ENCODE measurements at regions of chr4 and their contacts with region 1.

Region 1: GRCh38 chr4:184395971-184396391 is 78.4 kb downstream of the IRF2 start:
- DNase-seq: no peak
- H3K4me3 ChIP-seq: no peak overlapping the region
- H3K27ac ChIP-seq: no peak overlapping the region
- H3K4me1 ChIP-seq: peaks cover 22% of the 10 kb centered on the region
- H3K27me3 ChIP-seq: no peaks in the 10 kb centered on the region
- CTCF ChIP-seq: no peak
- EP300 ChIP-seq: no peak
- POLR2A ChIP-seq: no peak

Region 2: GRCh38 chr4:183165376-183165775 is 1230.6 kb before region 1 on chr4:
- intact Hi-C with region 1: no loop called
- DNase-seq: no peak
- H3K4me3 ChIP-seq: no peak overlapping the region
- H3K27ac ChIP-seq: no peak overlapping the region
- H3K4me1 ChIP-seq: peaks cover 3% of the 10 kb centered on the region
- H3K27me3 ChIP-seq: no peaks in the 10 kb centered on the region
- CTCF ChIP-seq: no peak
- EP300 ChIP-seq: no peak
- POLR2A ChIP-seq: no peak

Region 3: DNA sequence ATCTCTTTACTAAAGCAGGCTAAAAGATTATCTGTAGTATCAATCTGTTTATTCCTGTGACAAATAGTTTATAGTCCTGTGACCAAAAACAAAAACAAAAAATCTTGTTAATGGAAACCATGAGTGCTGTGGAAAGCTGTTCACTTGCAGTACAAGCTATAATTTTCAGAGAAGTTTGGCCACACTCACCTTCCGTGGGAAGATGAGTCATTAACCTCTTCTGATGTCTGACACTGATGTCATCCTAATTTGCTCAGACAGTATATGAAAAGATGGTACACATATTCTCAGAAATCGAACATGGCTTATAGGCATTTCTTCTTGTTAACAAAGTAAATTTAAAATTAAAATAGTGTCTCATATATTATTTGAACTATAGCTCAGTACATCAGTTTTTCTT is 158.4 kb before region 1 on chr4:
- intact Hi-C with region 1: no loop called
- DNase-seq: no peak
- H3K4me3 ChIP-seq: no peak overlapping the region
- H3K27ac ChIP-seq: no peak overlapping the region
- H3K4me1 ChIP-seq: no peaks in the 10 kb centered on the region
- H3K27me3 ChIP-seq: no peaks in the 10 kb centered on the region
- CTCF ChIP-seq: no peak
- EP300 ChIP-seq: no peak
- POLR2A ChIP-seq: no peak

Region 4: GRCh38 chr4:184282251-184282713 is 113.7 kb before region 1 on chr4:
- intact Hi-C with region 1: loop called in 1 of 4 experiments (anchors 10 kb)
- DNase-seq: no peak
- H3K4me3 ChIP-seq: no peak overlapping the region
- H3K27ac ChIP-seq: no peak overlapping the region
- H3K4me1 ChIP-seq: peaks cover 2% of the 10 kb centered on the region
- H3K27me3 ChIP-seq: no peaks in the 10 kb centered on the region
- CTCF ChIP-seq: no peak
- EP300 ChIP-seq: no peak
- POLR2A ChIP-seq: no peak

Region 5: DNA sequence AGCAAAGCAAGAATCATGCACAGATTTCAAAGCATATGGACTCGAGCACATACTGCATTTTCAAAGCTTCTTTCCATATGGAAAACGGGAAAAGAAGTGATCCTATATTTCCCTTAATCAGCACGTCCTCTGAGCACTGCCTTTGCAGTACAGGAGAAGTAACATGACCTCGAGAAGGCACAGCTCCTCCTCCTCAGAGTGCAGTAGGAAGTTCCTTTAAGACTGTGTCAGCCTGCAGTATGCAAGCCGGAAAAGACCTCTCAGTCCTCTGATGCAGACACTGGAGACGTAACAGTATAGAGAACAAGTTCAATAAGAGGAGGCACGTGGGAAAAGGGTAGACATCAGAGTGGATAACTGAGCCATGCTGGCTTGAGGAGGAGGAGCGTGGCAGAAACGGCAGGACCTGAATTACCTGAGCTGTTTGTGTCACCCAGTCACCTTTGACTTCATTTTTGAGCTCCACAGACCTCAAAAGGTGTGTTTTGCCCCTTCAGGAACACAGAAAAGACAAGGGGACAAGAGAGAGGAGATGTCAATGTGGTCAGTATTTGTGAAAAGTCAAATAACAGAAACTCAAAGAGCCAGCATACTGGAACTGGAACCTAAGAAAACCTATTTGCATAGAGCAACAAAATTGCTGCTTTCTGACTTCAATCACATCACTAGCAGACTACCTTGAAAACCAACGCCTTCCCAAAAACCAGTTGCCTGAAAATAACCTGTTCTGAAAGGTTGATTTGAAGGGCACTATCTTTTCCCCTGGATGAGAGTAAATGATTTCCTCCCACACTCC is 57.6 kb after region 1 on chr4:
- intact Hi-C with region 1: loop called in 1 of 4 experiments (anchors 10 kb)
- DNase-seq: no peak
- H3K4me3 ChIP-seq: no peak overlapping the region
- H3K27ac ChIP-seq: no peak overlapping the region
- H3K4me1 ChIP-seq: peaks cover 20% of the 10 kb centered on the region
- H3K27me3 ChIP-seq: no peaks in the 10 kb centered on the region
- CTCF ChIP-seq: no peak
- EP300 ChIP-seq: no peak
- POLR2A ChIP-seq: no peak

Measured in ovary (tissue), 10 donors.